Calu3 (cell line): ENCODE measurements at regions of chr4 and their contacts with region 1.

Region 1: GRCh38 chr4:157911662-157912061 is 261.2 kb downstream of the GASK1B start:
- DNase-seq: no peak
- H3K4me3 Mint-ChIP-seq: no peak overlapping the region
- H3K27ac Mint-ChIP-seq: no peak overlapping the region
- H3K4me1 Mint-ChIP-seq: no peaks in the 10 kb centered on the region
- H3K27me3 Mint-ChIP-seq: no peaks in the 10 kb centered on the region
- CTCF ChIP-seq: no peak

Region 2: DNA sequence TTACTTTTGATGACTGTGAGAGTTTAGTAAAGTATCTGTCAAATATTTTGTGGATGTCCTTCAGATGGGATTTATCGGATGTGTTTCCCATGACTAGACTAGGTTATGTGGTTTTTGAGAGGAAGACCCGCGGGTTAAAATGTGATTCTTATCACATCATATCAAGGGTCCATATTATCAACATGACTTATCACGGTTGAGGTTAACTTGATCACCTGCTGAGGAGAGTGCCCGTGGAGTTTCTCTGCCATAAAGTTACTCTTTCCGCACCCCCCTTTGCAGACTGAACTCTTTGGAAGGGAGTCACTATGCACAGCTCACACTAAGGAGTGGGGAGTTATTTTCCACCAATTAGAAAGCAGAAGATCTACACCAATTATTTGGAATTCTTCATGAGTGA is 797.0 kb before region 1 on chr4:
- CTCF ChIA-PET with region 1: interaction called, 10 read pairs
- intact Hi-C with region 1: no loop called
- DNase-seq: no peak
- H3K4me3 Mint-ChIP-seq: no peak overlapping the region
- H3K27ac Mint-ChIP-seq: no peak overlapping the region
- H3K4me1 Mint-ChIP-seq: peaks cover 10% of the 10 kb centered on the region
- H3K27me3 Mint-ChIP-seq: no peaks in the 10 kb centered on the region
- CTCF ChIP-seq: no peak